OCI-LY7 (cell line): ENCODE measurements at regions of chr6 and their contacts with region 1.

Region 1: DNA sequence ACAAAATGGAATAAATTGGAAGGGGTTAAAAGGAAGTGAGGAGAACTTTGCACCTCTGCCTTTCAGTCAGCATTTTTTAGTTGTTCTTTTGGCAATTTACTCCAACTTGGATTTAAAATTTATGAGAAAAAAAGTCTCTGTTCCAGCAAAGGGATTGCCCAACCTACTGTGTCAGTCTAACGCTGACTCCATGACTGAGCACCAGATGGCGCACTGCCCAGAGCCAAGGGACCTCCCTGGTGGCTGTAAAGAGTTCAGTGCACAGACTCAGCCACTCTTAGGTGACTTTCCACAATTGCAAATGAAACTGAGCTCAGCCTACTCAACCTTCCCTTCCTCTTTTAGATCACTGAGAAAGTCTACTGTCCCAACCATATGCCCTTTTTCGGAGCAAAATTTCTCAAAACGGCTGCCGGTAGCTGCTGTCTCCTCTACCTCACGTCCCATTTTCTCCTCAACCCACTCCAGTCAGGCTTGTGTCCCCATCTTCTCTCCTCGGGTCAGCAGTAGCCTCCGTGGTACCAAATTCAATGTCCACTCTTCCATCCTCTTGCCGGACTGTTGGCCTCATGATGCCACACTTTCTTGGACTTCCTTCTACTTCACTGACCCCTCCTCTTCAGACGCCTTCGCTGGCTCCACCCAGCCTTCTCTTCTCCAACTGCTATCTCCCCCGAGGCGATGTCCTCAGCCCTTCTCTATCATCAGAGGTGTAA is 38.7 kb downstream of the GSTA2 start:
- DNase-seq: peak; percentile 62
- H3K4me3 ChIP-seq: no peak overlapping the region
- H3K27ac ChIP-seq: no peak overlapping the region
- H3K4me1 ChIP-seq: no peaks in the 10 kb centered on the region
- CTCF ChIP-seq: peak; percentile 92

Region 2: DNA sequence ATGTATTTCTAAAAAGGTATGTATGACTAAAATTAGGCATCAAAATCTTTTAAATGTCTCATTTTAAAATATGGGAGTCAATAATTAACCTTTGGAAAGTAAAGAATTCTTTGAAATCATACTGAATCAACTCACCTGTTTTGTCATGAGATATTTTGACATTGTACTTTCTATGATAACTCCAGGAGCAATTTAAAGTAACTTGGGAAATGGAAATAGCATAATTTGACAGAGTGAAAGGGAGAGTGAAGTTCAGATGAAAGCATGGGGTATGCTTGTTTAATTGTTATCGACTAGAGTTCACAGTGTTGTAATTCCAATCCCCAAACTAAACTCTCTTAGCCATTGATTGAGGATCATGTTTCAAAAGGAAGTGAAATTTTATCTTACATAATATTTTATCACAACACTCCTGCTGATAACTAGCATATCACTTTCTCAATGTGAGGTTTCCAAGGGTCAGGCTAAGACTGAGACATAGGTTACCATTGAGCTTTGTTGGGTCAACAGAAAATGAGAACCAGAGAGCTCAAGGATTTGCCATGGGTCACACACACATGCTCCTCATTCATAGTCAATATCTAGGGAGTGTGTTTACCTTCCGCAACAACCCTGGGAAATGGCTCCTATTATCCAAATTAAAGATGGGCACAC is 76.8 kb after region 1 on chr6:
- CTCF ChIA-PET with region 1: no interaction called
- POLR2A ChIA-PET with region 1: no interaction called
- intact Hi-C with region 1: no loop called
- DNase-seq: no peak
- H3K4me3 ChIP-seq: no peak overlapping the region
- H3K27ac ChIP-seq: no peak overlapping the region
- H3K4me1 ChIP-seq: no peaks in the 10 kb centered on the region
- CTCF ChIP-seq: no peak

Region 3: DNA sequence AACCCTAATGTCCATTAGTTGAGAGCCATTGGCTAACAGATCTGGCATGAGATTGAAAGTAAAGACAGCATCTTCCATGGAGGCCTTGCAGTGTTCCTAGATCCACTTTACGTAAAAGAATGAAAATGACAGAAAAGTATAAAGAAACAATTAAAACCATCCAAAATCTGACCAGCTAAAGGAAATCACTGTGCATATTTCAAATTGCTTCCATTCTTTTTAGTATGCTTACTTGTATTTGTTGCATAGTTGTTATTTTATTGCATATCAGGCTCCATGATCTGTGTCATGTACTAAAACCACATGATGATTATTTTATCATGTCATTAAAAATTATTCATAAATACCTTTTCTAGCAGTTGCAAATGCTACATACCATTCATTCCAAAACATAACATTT is 752.4 kb after region 1 on chr6:
- CTCF ChIA-PET with region 1: no interaction called
- POLR2A ChIA-PET with region 1: no interaction called
- intact Hi-C with region 1: loop called (anchors 5 kb)
- DNase-seq: no peak
- H3K4me3 ChIP-seq: no peak overlapping the region
- H3K27ac ChIP-seq: no peak overlapping the region
- H3K4me1 ChIP-seq: no peaks in the 10 kb centered on the region
- CTCF ChIP-seq: no peak